ENCODE measurements at regions of chr11 and their contacts with region 1.

Region 1: GRCh38 chr11:62855571-62856332 is 16.4 kb upstream of the WDR74 start:
- DNase-seq: peak; percentile 98
- H3K4me3 ChIP-seq: peak overlapping the region; percentile 51 to 74 (median 70)
- H3K27ac ChIP-seq: peak overlapping the region; percentile 83 to 89 (median 85)
- H3K4me1 ChIP-seq: peaks cover 11 to 43% (median 24%) of the 10 kb centered on the region in 4 donors
- H3K27me3 ChIP-seq: no peaks in the 10 kb centered on the region
- CTCF ChIP-seq: peak in 1 of 5 experiments; percentile 27
- EP300 ChIP-seq: no peak
- POLR2A ChIP-seq: peak; percentile 99

Region 2: GRCh38 chr11:62591448-62592145 is 264.2 kb before region 1 on chr11 and contains the start of gene TUT1:
- in situ Hi-C with region 1: loop called in 1 of 4 experiments (anchors 25 kb)
- intact Hi-C with region 1: no loop called
- DNase-seq: peak; percentile 97
- H3K4me3 ChIP-seq: peak within 1 kb of the TSS; percentile 44 to 76 (median 66)
- H3K27ac ChIP-seq: peak within 1 kb of the TSS; percentile 93 to 98 (median 96)
- H3K4me1 ChIP-seq: peaks cover 16 to 37% (median 25%) of the 10 kb centered on the region in 4 donors
- H3K27me3 ChIP-seq: no peaks in the 10 kb centered on the region
- CTCF ChIP-seq: no peak
- EP300 ChIP-seq: no peak
- POLR2A ChIP-seq: peak; percentile 92
- total RNA-seq, gene TUT1: 6.0 to 12.4 (median 9.8) TPM

Region 3: DNA sequence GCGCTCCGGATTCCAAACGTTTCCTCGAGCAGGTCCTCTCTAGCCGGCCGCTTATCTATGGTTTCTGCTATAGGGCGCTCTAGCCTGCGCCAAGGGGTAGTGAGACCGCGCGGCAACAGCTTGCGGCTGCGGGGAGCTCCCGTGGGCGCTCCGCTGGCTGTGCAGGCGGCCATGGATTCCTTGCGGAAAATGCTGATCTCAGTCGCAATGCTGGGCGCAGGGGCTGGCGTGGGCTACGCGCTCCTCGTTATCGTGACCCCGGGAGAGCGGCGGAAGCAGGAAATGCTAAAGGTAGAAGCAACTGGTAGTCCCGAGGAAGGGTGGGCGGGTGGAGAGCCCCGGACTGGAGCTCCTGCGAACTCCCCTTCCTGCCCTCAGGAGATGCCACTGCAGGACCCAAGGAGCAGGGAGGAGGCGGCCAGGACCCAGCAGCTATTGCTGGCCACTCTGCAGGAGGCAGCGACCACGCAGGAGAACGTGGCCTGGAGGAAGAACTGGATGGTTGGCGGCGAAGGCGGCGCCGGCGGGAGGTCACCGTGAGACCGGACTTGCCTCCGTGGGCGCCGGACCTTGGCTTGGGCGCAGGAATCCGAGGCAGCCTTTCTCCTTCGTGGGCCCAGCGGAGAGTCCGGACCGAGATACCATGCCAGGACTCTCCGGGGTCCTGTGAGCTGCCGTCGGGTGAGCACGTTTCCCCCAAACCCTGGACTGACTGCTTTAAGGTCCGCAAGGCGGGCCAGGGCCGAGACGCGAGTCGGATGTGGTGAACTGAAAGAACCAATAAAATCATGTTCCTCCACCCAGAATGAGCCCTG is 184.0 kb before region 1 on chr11 and contains the starts of genes LBHD1 and UQCC3:
- in situ Hi-C with region 1: no loop called
- intact Hi-C with region 1: no loop called
- DNase-seq: peak; percentile 83
- H3K4me3 ChIP-seq: peak within 1 kb of the TSS; percentile 51 to 79 (median 62)
- H3K27ac ChIP-seq: peak within 1 kb of the TSS; percentile 92 to 93 (median 93)
- H3K4me1 ChIP-seq: peaks cover 21 to 54% (median 41%) of the 10 kb centered on the region in 4 donors
- H3K27me3 ChIP-seq: no peaks in the 10 kb centered on the region
- CTCF ChIP-seq: no peak
- EP300 ChIP-seq: no peak
- POLR2A ChIP-seq: peak; percentile 82
- total RNA-seq, gene LBHD1: 7.5 to 16.1 (median 10.1) TPM
- total RNA-seq, gene UQCC3: 6.4 to 26.2 (median 15.3) TPM

Region 4: DNA sequence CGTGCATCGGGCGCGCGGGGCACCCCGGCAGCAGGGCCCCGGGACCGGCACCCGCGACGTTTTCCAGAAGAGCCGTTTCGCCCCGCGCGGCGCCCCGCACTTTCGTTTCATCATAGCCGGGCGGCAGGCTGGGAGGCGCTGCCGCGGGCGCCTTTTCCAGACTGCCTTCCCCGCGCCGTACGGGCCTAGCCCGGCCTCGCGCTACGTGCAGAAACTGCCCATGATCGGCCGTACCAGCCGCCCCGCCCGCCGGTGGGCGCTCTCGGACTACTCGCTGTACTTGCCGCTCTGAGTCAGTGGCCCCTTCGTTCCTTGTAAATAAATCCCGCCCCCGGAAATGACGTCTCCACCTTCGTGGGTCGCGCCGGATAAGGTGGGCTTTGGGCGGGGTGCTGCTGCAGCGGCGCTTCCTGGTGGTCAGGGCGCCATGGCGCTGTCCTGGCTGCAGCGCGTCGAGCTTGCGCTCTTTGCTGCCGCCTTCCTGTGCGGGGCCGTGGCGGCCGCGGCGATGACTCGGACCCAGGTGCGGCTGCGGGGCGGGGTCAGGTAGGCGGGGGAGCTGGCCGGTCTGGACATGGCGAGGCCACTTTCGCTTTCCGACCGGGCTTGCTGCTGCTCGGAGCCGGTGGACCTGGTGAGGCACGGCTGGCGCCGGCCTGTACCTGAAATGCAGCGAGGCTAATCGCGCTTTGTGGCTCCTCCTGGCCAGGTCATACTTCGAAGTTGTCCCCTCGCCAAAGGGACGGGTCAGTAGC is 68.6 kb before region 1 on chr11 and contains the start of gene TMEM179B:
- in situ Hi-C with region 1: loop called in 3 of 4 experiments (anchors 5 to 10 kb)
- intact Hi-C with region 1: loop called (anchors 1 kb)
- DNase-seq: peak; percentile 99
- H3K4me3 ChIP-seq: peak within 1 kb of the TSS; percentile 71 to 100 (median 96)
- H3K27ac ChIP-seq: peak within 1 kb of the TSS; percentile 96 to 100 (median 99)
- H3K4me1 ChIP-seq: peaks cover 19 to 47% (median 37%) of the 10 kb centered on the region in 4 donors
- H3K27me3 ChIP-seq: no peaks in the 10 kb centered on the region
- CTCF ChIP-seq: peak in 4 of 5 experiments; percentile 6 to 51 (median 34)
- EP300 ChIP-seq: no peak
- POLR2A ChIP-seq: peak; percentile 99
- total RNA-seq, gene TMEM179B: 65.9 to 112 (median 89.8) TPM

Region 5: GRCh38 chr11:62831520-62832335 is 24.0 kb before region 1 on chr11 and contains the start of gene STX5:
- in situ Hi-C with region 1: no loop called
- intact Hi-C with region 1: loop called (anchors 1 kb)
- DNase-seq: peak; percentile 100
- H3K4me3 ChIP-seq: peak within 1 kb of the TSS; percentile 81 to 94 (median 90)
- H3K27ac ChIP-seq: peak within 1 kb of the TSS; percentile 95 to 98 (median 96)
- H3K4me1 ChIP-seq: peaks cover 17 to 36% (median 19%) of the 10 kb centered on the region in 4 donors
- H3K27me3 ChIP-seq: no peaks in the 10 kb centered on the region
- CTCF ChIP-seq: no peak
- EP300 ChIP-seq: no peak
- POLR2A ChIP-seq: peak; percentile 94
- total RNA-seq, gene STX5: 15.3 to 62.5 (median 30.2) TPM